MCF 10A (cell line): ENCODE measurements at regions of chr17 and their contacts with region 1.

Region 1: DNA sequence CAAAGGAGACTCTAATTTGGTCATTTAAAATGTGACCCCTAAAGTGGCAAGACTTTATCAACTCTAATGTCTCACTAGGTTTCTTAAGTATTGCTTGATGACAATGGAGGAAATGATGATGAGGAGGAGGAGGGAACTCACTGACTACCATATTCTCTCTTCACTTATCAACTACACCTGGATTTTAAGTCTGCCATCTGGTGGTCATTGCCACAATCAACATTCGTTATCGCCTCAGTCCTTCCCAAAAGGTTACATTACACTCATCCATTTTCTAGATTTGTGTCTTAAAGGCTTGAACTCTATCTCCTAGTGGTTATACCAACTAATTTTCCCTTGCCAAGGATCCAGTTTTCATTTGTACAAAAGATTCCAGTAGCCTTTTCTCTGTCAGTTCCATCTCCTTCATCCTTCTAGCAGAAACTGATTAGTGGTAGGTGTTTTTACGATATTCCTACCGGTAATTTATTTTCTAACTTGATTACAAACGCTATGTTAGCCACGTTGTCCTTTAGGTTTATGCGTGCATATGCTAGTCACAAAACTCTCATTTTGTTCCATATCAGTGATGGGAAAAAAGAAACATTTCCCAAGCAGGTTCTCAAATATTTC is 114.6 kb upstream of the NOG start:
- DNase-seq: peak; percentile 59
- H3K4me3 Mint-ChIP-seq: no peak overlapping the region
- H3K27ac Mint-ChIP-seq: no peak overlapping the region
- H3K4me1 Mint-ChIP-seq: no peaks in the 10 kb centered on the region
- H3K27me3 Mint-ChIP-seq: no peaks in the 10 kb centered on the region
- CTCF ChIP-seq: peak; percentile 43

Region 2: DNA sequence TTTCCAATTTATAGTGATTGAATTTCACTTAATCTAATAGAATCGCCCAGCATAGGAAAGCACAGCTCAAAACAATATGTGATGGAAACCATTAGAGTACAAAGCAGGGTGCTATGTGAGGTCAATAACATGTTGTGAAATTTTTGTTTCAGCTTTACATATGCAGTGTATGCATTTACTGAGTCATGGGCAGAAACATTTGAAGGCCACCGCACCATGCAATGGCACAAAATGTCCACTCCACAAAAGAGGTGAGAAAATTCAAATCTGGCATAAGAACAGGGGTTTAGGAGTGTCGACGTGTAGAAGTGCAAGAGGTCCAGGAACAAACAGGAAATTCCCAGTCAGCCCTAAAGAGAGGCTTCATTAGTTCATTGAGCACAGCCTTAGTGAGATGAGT is 194.5 kb before region 1 on chr17:
- CTCF ChIA-PET with region 1: no interaction called
- POLR2A ChIA-PET with region 1: no interaction called
- intact Hi-C with region 1: no loop called
- DNase-seq: peak; percentile 30
- H3K4me3 Mint-ChIP-seq: no peak overlapping the region
- H3K27ac Mint-ChIP-seq: no peak overlapping the region
- H3K4me1 Mint-ChIP-seq: no peaks in the 10 kb centered on the region
- H3K27me3 Mint-ChIP-seq: no peaks in the 10 kb centered on the region
- CTCF ChIP-seq: no peak

Region 3: DNA sequence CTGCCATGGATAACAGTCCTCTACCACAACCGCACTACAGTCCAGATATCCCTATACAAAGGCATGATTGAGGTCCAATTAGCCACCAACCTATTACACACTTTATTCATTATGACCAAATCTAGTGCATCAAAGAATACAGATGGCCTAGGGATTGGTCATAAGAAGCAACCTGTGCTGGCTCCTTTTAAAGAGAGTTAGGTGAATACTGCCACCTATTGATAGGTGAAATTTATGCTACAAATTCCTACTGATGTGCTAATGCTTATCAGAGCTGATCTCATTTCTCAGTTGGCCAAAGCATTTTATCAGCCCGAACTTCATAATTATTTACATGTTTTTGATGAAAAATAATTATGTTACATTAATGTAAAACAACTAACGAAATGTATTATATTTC is 159.4 kb before region 1 on chr17:
- CTCF ChIA-PET with region 1: no interaction called
- POLR2A ChIA-PET with region 1: no interaction called
- intact Hi-C with region 1: loop called (anchors 2 kb)
- DNase-seq: peak; percentile 68
- H3K4me3 Mint-ChIP-seq: no peak overlapping the region
- H3K27ac Mint-ChIP-seq: no peak overlapping the region
- H3K4me1 Mint-ChIP-seq: no peaks in the 10 kb centered on the region
- H3K27me3 Mint-ChIP-seq: peaks cover 12% of the 10 kb centered on the region
- CTCF ChIP-seq: peak; percentile 55

Region 4: DNA sequence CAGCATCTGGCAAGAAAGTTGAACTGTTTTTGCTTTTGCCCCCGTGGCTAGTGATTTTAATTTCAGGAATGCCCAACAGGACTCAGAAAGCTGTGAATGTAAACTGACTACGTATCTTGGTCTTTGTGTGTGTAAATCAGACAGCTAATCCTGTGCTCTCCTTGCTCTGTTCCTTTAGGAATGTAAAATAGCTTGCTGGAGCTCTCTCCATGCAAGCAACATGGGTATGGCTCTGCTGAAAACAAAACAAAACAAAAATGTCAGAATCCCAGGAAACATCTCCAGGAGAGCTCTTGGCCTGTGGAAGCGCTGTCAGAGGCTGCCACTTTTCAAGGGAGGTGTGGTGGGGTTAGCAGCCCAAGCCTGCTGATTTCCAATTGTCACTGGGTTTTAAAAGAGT is 47.2 kb before region 1 on chr17:
- CTCF ChIA-PET with region 1: no interaction called
- POLR2A ChIA-PET with region 1: no interaction called
- intact Hi-C with region 1: no loop called
- DNase-seq: no peak
- H3K4me3 Mint-ChIP-seq: no peak overlapping the region
- H3K27ac Mint-ChIP-seq: no peak overlapping the region
- H3K4me1 Mint-ChIP-seq: no peaks in the 10 kb centered on the region
- H3K27me3 Mint-ChIP-seq: no peaks in the 10 kb centered on the region
- CTCF ChIP-seq: no peak